Vagina (tissue), 2 donors: ENCODE measurements at regions of chr19 and their contacts with region 1.

Region 1: DNA sequence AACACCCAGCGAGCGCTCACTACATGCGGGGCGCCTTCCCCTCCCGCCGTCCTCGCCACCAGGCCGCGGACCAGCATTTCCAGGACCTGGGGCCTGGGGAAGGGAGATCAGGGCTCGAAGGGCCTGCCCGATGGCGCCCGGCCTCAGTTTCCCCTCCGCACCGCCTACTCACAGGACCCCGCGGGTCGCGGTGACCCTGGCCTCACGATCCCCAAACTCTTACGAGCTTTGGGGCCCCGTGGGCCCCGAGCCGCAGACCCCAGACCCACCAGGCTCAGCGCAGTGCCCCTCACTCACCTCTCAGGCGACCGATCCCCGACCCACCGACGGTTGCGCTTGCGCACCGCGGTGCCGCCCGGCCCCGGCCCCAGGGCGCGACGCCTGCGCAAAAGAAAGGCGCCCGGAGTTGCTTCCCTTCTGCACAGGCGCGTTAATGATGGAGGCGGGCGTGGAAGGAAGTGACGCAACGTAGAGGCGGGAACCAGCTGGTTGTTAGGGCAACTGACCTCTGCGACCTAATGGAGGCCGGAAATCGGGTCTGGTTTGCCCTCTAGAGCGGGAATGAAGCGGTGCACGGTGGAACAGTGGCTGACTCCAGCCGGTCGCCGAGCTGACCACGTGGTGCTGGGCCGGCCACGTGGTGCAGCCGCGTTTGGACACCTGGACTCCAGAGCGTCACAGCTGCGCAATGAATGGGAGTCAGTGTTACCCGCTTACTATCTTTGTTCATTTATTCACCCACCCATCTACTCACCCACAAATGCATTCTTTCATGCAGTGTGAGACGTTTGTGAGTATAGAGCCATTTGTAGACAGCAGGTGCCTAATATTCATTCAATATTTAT is at the start of gene SGTA:
- DNase-seq: peak; percentile 98
- H3K4me3 ChIP-seq: peak within 1 kb of the TSS; percentile 75 to 87
- H3K27ac ChIP-seq: peak within 1 kb of the TSS; percentile 88
- H3K4me1 ChIP-seq: peaks cover 56% of the 10 kb centered on the region
- H3K27me3 ChIP-seq: no peaks in the 10 kb centered on the region
- CTCF ChIP-seq: peak in 1 of 3 experiments; percentile 54
- POLR2A ChIP-seq: peak in 1 of 2 donors; percentile 79
- total RNA-seq, gene SGTA: 58.4 TPM

Region 2: DNA sequence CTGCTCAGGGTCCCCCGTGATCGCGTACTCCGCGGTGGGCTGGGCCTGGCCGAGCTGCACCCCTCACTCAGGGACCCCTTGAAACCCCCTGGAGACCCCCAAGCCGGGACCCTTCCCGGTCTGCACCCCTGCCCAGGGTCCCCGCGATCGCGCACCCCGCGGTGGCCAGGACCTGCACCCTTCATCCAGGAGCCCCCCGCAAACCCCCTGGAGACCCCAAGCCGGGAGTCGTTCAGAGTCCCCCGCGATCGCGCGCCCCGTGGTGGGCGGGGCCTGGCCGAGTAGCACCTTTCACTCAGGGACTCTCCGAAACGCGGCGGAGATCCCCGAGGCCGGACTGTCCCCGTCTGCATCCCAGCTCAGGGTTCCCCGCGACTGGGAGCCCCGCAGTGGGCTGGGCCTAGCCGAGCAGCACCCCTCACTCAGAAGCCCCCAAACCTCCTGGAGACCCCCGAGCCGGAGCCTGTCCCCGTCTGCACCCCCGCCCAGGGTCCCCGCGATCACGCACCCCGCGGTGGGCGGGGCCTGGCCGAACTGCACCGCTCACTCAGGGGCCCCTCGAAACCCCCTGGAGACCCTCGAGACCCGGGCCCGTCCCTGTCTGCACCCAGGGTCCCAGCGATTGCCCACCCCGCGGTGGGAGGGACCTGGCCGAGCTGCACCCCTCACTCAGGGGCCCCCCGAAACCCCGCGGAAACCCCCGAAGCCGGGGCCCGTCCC is 327.1 kb before region 1 on chr19:
- intact Hi-C with region 1: loop called (anchors 5 kb)
- DNase-seq: no peak
- H3K4me3 ChIP-seq: peak overlapping the region; percentile 93 to 96
- H3K27ac ChIP-seq: peak overlapping the region; percentile 63
- H3K4me1 ChIP-seq: peaks cover 20% of the 10 kb centered on the region
- H3K27me3 ChIP-seq: no peaks in the 10 kb centered on the region
- CTCF ChIP-seq: no peak
- POLR2A ChIP-seq: no peak